ENCODE measurements at regions of chr6 and their contacts with region 1.

Region 1: GRCh38 chr6:83067448-83068413 is at the start of gene DOP1A:
- DNase-seq: peak; percentile 97
- ATAC-seq: peak; percentile 92
- H3K4me3 Mint-ChIP-seq: peak within 1 kb of the TSS; percentile 90
- H3K27ac Mint-ChIP-seq: peak within 1 kb of the TSS; percentile 89
- H3K4me1 Mint-ChIP-seq: peaks cover 44% of the 10 kb centered on the region
- H3K27me3 Mint-ChIP-seq: no peaks in the 10 kb centered on the region
- total RNA-seq, gene DOP1A: 14.9 to 18.9 TPM

Region 2: GRCh38 chr6:82270881-82271645 is 796.7 kb before region 1 on chr6:
- CTCF ChIA-PET with region 1: interaction called, 57 read pairs
- POLR2A ChIA-PET with region 1: no interaction called
- DNase-seq: no peak
- ATAC-seq: no peak
- H3K4me3 Mint-ChIP-seq: no peak overlapping the region
- H3K27ac Mint-ChIP-seq: no peak overlapping the region
- H3K4me1 Mint-ChIP-seq: no peaks in the 10 kb centered on the region
- H3K27me3 Mint-ChIP-seq: no peaks in the 10 kb centered on the region

Region 3: GRCh38 chr6:83138118-83138722 is 70.5 kb after region 1 on chr6:
- CTCF ChIA-PET with region 1: interaction called, 11 read pairs
- POLR2A ChIA-PET with region 1: no interaction called
- DNase-seq: no peak
- ATAC-seq: no peak
- H3K4me3 Mint-ChIP-seq: no peak overlapping the region
- H3K27ac Mint-ChIP-seq: no peak overlapping the region
- H3K4me1 Mint-ChIP-seq: no peaks in the 10 kb centered on the region
- H3K27me3 Mint-ChIP-seq: no peaks in the 10 kb centered on the region

Region 4: GRCh38 chr6:83192871-83193746 is 125.4 kb after region 1 on chr6 and contains the starts of genes PGM3 and RWDD2A:
- CTCF ChIA-PET with region 1: interaction called, 105 read pairs
- POLR2A ChIA-PET with region 1: no interaction called
- DNase-seq: peak; percentile 90
- ATAC-seq: peak; percentile 98
- H3K4me3 Mint-ChIP-seq: peak within 1 kb of the TSS; percentile 90
- H3K27ac Mint-ChIP-seq: peak within 1 kb of the TSS; percentile 88
- H3K4me1 Mint-ChIP-seq: peaks cover 20% of the 10 kb centered on the region
- H3K27me3 Mint-ChIP-seq: peaks cover 6% of the 10 kb centered on the region
- total RNA-seq, gene PGM3: 9.3 to 10.0 TPM
- total RNA-seq, gene RWDD2A: 0.57 to 0.87 TPM

Region 5: DNA sequence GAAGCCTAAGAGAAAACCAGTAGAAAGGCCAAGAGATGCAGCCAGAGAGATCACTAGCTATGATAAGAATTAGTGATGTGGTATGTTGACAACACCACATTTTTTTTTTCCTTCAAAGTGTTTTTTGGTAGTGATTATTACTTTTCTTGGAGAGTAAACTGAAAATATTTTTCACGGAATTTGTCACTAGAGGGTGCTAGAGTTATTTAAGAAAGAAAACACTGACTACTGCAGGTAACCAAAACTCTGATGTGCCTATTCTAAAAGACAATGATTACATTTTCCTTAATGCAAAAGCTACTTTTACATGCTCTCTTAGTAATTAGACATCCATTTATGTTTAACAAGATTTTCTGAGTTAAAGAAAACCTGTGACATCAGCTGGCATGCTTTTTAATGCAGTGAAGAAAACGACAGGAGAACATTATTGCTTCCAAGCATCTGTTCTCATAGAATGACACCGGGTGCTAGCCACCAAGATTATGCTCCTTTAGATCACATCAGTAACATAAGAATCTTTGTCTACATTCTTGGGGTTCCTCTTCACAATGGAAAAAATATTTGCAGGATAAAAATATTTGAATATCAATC is 154.3 kb after region 1 on chr6:
- CTCF ChIA-PET with region 1: interaction called, 272 read pairs
- POLR2A ChIA-PET with region 1: no interaction called
- DNase-seq: no peak
- ATAC-seq: no peak
- H3K4me3 Mint-ChIP-seq: no peak overlapping the region
- H3K27ac Mint-ChIP-seq: no peak overlapping the region
- H3K4me1 Mint-ChIP-seq: no peaks in the 10 kb centered on the region
- H3K27me3 Mint-ChIP-seq: peaks cover 2% of the 10 kb centered on the region